Activated CD4-positive, alpha-beta T cell treated with anti-CD3 and anti-CD28 coated beads for 36 hours (primary cell): ENCODE measurements at regions of chr17 and their contacts with region 1.

Region 1: DNA sequence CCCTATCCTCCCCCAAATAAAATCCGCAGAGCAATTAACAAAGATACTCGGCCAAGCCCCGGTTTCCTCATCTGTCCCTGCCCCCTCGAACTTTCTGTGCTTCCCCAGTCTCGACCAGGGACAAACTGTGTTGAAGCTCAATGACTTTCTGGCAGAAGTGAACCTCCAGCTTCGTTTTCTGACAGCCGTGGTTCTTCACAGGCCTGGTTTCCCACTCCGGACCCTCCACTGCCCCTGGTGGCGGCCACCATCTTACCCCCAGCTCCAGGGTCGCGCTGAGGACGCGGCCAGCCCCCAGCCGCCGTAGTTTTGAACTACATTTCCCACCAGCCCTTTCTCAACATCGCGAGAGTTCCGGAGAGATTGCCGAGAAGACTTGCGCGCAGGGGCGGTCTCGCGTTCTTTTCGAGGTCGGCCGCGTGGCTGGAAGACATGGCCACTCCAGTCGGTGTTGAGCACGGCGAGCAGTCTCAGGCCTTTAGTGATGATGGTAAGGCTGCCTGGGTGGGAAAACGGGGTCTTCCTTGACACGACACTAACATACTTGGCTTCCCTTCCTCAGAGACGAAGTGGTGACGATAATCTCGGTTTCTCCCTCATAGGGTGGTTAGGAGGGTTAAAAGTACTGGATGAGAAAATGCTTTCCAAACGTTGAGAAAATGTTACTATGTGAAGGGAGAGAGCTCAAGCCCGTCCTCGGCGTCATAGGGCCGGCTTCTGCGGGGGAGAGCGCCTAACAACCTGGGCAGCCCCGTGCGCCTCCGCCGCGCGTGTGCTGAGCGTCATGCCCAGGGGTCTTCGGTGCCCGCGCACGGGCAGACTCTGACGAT is 17.7 kb downstream of the PRCD start:
- DNase-seq: peak; percentile 97
- ATAC-seq: peak; percentile 87
- H3K4me3 Mint-ChIP-seq: peak overlapping the region; percentile 100
- H3K27ac Mint-ChIP-seq: peak overlapping the region; percentile 99
- H3K4me1 Mint-ChIP-seq: peaks cover 50% of the 10 kb centered on the region
- H3K27me3 Mint-ChIP-seq: no peaks in the 10 kb centered on the region

Region 2: GRCh38 chr17:75940724-75941441 is 616.7 kb before region 1 on chr17 and contains the start of gene FBF1:
- CTCF ChIA-PET with region 1: no interaction called
- POLR2A ChIA-PET with region 1: no interaction called
- intact Hi-C with region 1: loop called in 1 of 2 experiments (anchors 2 kb)
- DNase-seq: peak; percentile 94
- ATAC-seq: peak; percentile 100
- H3K4me3 Mint-ChIP-seq: peak within 1 kb of the TSS; percentile 92
- H3K27ac Mint-ChIP-seq: peak within 1 kb of the TSS; percentile 82
- H3K4me1 Mint-ChIP-seq: peaks cover 13% of the 10 kb centered on the region
- H3K27me3 Mint-ChIP-seq: no peaks in the 10 kb centered on the region
- total RNA-seq, gene FBF1: 16.2 to 18.0 TPM

Region 3: GRCh38 chr17:76353599-76354316 is 203.8 kb before region 1 on chr17 and contains the start of gene PRPSAP1:
- CTCF ChIA-PET with region 1: interaction called, 3 read pairs
- POLR2A ChIA-PET with region 1: no interaction called
- intact Hi-C with region 1: loop called in 1 of 2 experiments (anchors 1 kb)
- DNase-seq: peak; percentile 88
- ATAC-seq: peak; percentile 97
- H3K4me3 Mint-ChIP-seq: peak within 1 kb of the TSS; percentile 78
- H3K27ac Mint-ChIP-seq: peak within 1 kb of the TSS; percentile 96
- H3K4me1 Mint-ChIP-seq: peaks cover 18% of the 10 kb centered on the region
- H3K27me3 Mint-ChIP-seq: no peaks in the 10 kb centered on the region
- total RNA-seq, gene PRPSAP1: 26.7 to 34.9 TPM

Region 4: DNA sequence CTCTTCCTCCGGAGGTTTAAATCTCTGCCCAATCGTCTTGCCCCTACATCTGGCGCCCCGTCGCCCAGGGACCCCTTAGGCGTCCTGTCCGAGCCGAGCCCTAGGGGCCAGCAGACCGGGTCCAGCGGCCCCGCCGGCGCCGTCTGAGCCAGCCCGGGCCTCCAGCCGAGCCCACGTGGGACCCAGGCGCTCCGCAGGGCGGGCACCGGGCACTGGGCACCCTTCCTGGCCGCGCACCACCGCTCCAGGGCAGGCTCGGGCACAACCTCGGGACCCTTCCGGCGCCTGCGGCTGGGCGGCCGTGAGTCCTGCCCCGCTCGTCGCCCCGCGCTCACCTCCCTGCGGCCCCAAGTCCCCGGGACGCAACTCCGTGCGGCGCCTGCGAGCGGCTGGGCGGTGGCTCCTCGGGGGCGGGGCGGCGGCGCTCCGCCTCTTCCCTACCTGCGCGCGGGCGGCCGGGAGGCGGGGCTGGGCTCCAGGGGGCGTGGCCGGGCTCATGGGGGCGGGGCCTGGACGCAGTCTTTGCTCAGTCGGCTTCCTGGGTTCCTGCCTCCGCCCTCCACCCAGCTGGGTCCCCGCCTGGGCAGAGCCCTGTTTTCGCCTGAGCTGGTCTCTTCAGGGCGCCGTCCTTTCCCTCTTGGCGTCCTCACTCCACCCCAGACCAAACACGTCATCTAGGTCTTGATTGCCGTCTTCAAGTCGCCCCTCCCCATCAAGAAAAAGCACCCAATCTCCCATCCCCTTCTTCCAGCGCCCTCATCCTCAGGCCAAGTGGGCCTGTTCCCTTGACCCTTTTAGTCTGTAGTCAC is 56.4 kb before region 1 on chr17 and contains the start of gene RHBDF2:
- CTCF ChIA-PET with region 1: no interaction called
- POLR2A ChIA-PET with region 1: no interaction called
- intact Hi-C with region 1: loop called in 1 of 2 experiments (anchors 1 kb)
- DNase-seq: peak; percentile 98
- ATAC-seq: peak; percentile 91
- H3K4me3 Mint-ChIP-seq: peak within 1 kb of the TSS; percentile 87
- H3K27ac Mint-ChIP-seq: peak within 1 kb of the TSS; percentile 94
- H3K4me1 Mint-ChIP-seq: peaks cover 29% of the 10 kb centered on the region
- H3K27me3 Mint-ChIP-seq: no peaks in the 10 kb centered on the region
- total RNA-seq, gene RHBDF2: 23.9 to 28.4 TPM

Region 5: GRCh38 chr17:76547184-76547641 is 10.4 kb before region 1 on chr17:
- CTCF ChIA-PET with region 1: interaction called, 11 read pairs
- POLR2A ChIA-PET with region 1: no interaction called
- intact Hi-C with region 1: no loop called
- DNase-seq: peak; percentile 70
- ATAC-seq: peak; percentile 81
- H3K4me3 Mint-ChIP-seq: no peak overlapping the region
- H3K27ac Mint-ChIP-seq: no peak overlapping the region
- H3K4me1 Mint-ChIP-seq: peaks cover 4% of the 10 kb centered on the region
- H3K27me3 Mint-ChIP-seq: peaks cover 10% of the 10 kb centered on the region

Region 6: DNA sequence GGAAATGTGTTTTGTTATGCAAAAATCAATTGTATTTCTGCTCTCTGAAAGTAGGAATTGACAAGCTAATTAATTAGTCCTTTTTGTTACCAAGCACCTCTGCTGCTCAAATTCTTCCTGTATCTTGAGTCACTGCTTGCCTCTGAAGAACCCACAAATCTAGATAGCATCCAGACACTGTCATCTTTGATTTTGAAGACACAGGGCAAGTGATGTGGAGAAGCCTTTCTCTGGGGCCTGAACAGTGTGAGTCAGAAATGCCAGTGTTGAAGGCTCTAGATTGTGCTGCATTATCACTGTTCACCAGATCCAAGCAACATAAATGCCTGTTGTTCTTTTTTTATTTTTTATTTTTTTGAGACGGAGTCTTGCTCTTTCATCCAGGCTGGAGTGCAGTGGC is 96.8 kb after region 1 on chr17:
- CTCF ChIA-PET with region 1: no interaction called
- POLR2A ChIA-PET with region 1: no interaction called
- intact Hi-C with region 1: no loop called
- DNase-seq: no peak
- ATAC-seq: peak; percentile 81
- H3K4me3 Mint-ChIP-seq: no peak overlapping the region
- H3K27ac Mint-ChIP-seq: no peak overlapping the region
- H3K4me1 Mint-ChIP-seq: peaks cover 13% of the 10 kb centered on the region
- H3K27me3 Mint-ChIP-seq: peaks cover 3% of the 10 kb centered on the region

Region 7: DNA sequence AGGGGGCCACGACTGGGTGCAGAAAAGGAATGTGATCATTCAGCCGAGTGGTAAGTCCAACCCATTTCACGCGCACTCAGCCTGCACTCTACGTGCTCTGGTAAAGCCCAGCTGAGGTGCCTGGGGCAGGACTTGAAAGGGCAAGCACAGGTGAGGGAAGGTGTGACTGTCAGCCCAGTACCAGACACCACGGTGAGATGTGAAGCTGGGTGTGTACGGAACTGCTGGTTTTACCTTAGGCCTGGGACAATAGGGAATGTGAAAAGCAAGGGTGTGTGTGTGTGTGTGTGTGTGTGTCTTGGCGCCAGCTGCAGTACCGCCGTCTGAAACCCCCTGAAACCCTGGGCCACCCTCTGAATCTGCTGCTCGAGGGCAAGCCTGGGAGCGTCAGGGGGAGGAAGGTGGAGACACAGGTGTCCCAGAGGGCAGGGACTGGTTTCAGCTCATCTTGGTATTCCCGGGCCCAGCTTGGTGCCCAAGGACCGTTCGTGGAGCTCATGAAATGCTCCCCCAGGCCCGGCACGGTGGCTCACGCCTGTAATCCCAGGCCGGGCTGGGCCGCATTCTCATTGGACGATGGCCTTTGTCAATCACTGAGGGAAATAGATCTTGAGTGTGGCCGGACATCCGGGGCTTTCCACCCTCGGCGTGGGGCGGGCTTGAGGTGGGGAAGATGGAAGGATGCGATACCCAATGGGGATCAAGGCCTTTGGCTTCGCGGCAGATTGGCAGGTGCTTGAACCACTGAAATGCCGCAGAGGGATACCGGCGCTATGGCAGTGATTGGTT is 113.7 kb after region 1 on chr17:
- CTCF ChIA-PET with region 1: interaction called, 3 read pairs
- POLR2A ChIA-PET with region 1: interaction called, 7 read pairs
- intact Hi-C with region 1: loop called (anchors 1 to 5 kb)
- DNase-seq: peak; percentile 100
- ATAC-seq: peak; percentile 100
- H3K4me3 Mint-ChIP-seq: peak overlapping the region; percentile 87
- H3K27ac Mint-ChIP-seq: peak overlapping the region; percentile 95
- H3K4me1 Mint-ChIP-seq: peaks cover 25% of the 10 kb centered on the region
- H3K27me3 Mint-ChIP-seq: no peaks in the 10 kb centered on the region

Region 8: GRCh38 chr17:77140166-77140878 is 582.7 kb after region 1 on chr17:
- CTCF ChIA-PET with region 1: no interaction called
- POLR2A ChIA-PET with region 1: no interaction called
- intact Hi-C with region 1: loop called in 1 of 2 experiments (anchors 1 kb)
- DNase-seq: peak; percentile 100
- ATAC-seq: peak; percentile 79
- H3K4me3 Mint-ChIP-seq: peak overlapping the region; percentile 68
- H3K27ac Mint-ChIP-seq: peak overlapping the region; percentile 93
- H3K4me1 Mint-ChIP-seq: peaks cover 51% of the 10 kb centered on the region
- H3K27me3 Mint-ChIP-seq: no peaks in the 10 kb centered on the region